ENCODE measurements at regions of chr6 and their contacts with region 1.

Region 1: DNA sequence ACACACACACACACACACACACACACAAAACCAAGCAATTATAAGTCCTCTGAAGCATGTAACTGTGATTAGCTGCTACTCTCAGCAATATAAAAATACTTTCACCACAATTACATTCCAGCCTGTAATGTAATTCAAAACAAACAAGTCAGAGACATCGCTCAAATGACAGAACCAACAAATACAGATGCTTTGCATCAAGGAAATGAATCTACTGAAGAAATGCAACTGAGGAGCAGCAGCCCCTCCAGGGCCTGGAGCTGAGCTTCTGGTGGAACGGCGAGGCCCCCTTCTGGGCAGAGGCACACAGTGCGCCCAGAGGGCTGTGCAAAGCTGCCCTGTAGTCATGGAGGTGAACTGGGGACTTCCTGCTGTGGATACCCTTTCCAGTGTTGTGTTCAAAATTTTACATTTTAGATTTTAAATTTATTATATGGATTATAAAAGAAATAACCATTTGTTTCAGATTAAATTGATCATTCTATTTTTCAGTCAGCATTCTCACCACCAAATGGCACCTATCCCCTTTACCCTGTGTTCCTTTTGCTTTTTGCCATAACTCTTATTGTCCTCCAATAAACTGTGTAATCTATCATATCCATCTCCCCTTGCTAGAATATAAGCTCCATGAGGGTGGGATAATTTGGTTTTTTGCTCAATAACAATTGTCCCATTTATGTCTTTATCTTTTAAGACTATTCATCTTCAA is 23.2 kb downstream of the ADAT2 start:
- DNase-seq: peak; percentile 62 to 90 (median 80)

Region 2: DNA sequence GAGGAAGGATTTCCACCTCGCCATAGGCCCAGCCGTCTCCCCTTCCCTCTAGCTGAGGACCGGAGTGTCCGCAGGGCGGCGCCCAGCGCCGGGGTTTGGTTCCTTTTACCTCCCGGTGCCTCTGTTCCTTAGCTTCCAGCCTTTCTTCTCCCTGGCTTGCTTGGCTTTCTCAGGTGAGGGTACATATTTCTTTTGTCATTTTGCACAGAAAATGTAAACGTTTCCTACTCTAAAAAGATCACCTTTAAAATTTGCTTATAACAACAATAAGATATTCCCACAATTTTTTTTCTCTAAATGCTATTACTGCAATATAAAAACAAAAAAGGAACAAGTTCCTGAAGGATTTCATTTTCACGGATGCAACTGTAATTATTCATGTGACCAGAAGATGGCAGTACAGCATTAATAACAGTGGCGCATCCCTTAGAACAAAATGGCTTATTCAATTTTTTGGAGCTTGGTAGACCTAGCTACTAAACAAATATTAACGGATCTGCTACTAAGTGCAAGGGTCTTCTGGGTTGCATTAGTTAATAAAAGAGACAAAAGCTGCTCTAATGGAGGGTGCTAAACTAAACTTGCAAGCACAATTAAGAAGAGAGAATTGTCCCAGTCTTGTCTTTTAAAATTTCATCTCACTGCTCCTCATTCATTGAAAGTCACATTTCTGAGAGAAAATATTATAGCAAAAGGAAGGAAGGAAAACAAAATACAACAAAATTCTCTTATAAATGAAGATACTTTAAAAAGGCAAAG is 952.6 kb before region 1 on chr6:
- intact Hi-C with region 1: loop called (anchors 10 kb)
- DNase-seq: peak in 39 of 42 donors; percentile 3 to 75 (median 33)

Region 3: GRCh38 chr6:143026696-143027449 is 400.4 kb before region 1 on chr6:
- intact Hi-C with region 1: loop called (anchors 10 kb)
- DNase-seq: peak in 40 of 42 donors; percentile 12 to 79 (median 48)

Region 4: DNA sequence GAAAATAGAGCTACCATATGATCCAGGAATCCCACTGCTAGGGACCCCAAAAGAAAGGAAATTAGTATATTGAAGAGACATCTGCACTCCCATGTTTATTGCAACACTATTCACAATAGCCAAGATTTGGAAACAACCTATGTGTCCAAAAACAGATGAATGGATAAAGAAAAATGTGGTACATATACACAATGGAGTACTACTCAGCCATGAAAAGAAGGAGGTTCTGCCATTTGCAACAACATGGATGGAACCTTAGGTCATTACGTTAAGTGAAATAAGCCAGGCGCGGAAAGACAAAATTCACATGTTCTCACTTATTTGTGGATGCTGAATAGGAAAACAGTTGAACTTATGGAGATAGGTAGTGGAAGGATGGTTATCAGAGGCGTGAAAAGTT is 114.1 kb before region 1 on chr6:
- intact Hi-C with region 1: no loop called
- DNase-seq: no peak